ENCODE measurements at regions of chr1 and their contacts with region 1.

Region 1: DNA sequence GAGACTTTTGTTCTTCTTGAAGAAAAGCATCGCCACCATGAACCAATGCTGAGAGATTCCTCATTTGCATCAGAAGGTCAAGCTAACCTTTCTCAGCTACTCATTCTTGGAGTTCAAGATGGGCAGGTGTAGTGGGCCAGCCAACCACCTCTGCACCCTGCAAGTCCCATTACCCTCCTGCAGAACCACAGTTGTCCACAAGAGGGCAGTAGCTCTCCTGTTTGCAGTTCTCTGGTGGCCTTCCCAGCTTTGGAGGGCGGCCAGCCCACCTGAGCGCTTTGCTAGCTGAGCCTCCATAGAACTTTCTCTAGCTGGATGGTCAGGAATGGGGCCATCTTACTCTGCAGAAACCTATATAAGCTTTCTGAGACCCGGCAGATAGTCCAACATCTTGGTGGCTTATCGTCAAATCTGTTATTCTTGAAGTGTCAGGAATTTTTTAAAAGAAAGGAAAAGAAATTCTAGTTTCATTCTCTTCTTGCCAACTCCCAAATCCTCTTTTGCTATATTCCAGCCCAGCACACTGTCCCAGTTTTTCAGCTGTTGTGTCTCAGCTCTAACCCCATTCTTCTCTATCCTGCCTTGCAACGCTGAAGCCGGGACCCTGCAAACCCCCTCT is 11.0 kb upstream of the LMX1A start:
- DNase-seq: peak; percentile 71 to 74
- ATAC-seq: peak; percentile 65 to 89; a peak in 5 of 6 replicates
- H3K4me3 ChIP-seq: no peak overlapping the region
- H3K27ac ChIP-seq: no peak overlapping the region
- H3K4me1 ChIP-seq: no peaks in the 10 kb centered on the region
- CTCF ChIP-seq: peak; percentile 75
- EP300 ChIP-seq: no peak
- POLR2A ChIP-seq: no peak
- RAD21 ChIP-seq: peak; percentile 46 to 48; a peak in 4 of 5 replicates

Region 2: DNA sequence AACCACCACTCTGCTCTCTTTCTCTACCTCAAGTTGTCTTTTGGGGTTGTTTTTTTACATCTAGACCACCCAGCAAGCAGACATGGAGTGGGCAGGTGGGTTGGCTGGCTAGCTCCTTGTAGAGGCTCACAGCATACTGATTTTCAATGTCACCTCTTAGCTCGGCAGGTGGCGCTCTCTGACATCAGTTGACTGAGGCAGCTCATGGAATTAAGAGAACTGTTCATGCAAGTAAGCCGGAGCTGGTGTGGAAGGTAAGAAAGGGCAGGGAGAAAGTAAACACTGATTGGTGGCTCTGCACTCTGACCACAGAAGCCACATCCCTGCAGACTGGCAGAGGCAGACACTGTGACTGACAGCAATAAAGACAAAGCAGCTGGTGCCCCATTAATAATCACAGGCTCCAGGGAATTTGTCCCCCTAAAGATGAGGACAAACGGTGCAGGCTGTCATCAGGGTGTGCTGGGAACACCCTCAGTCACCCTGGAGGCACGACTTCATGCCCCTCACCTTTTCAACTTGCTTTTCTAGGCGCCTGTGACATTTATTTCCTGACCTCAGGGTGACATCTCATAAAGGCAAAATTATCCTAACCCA is 237.8 kb before region 1 on chr1:
- CTCF ChIA-PET with region 1: interaction called, 24 read pairs
- POLR2A ChIA-PET with region 1: no interaction called
- DNase-seq: peak; percentile 42 to 61
- ATAC-seq: peak; percentile 90 to 95
- H3K4me3 ChIP-seq: no peak overlapping the region
- H3K27ac ChIP-seq: no peak overlapping the region
- H3K4me1 ChIP-seq: no peaks in the 10 kb centered on the region
- CTCF ChIP-seq: peak; percentile 59
- EP300 ChIP-seq: no peak
- POLR2A ChIP-seq: no peak
- RAD21 ChIP-seq: peak; percentile 46 to 54; a peak in 4 of 5 replicates

Region 3: DNA sequence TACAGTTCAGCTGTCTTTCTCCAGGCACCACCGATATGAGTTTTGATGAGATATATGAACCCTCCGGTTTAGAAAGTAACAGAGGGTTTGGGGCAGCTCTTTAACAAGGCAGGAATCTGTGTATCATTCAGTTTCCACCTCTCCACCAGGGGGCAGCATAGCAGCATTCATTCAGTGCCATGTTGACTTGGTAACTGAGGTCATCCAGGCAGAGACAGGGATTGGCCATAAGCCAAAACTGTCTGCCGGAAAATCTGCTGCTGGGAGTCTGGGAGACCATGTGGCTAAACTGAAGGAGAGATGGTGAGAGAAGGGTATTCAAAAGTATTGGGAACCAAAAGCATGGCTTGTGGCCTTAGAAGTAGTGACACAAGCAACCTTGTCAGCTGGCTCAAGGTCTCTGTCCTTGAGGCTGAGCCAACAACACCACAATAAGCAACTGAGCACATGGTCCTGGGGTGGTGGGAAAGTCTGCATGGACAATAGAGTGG is 109.5 kb before region 1 on chr1:
- CTCF ChIA-PET with region 1: interaction called, 35 read pairs
- POLR2A ChIA-PET with region 1: no interaction called
- DNase-seq: peak; percentile 61 to 65
- ATAC-seq: peak; percentile 70 to 92; a peak in 5 of 6 replicates
- H3K4me3 ChIP-seq: no peak overlapping the region
- H3K27ac ChIP-seq: no peak overlapping the region
- H3K4me1 ChIP-seq: no peaks in the 10 kb centered on the region
- CTCF ChIP-seq: peak; percentile 56
- EP300 ChIP-seq: no peak
- POLR2A ChIP-seq: no peak
- RAD21 ChIP-seq: peak; percentile 63 to 71

Region 4: DNA sequence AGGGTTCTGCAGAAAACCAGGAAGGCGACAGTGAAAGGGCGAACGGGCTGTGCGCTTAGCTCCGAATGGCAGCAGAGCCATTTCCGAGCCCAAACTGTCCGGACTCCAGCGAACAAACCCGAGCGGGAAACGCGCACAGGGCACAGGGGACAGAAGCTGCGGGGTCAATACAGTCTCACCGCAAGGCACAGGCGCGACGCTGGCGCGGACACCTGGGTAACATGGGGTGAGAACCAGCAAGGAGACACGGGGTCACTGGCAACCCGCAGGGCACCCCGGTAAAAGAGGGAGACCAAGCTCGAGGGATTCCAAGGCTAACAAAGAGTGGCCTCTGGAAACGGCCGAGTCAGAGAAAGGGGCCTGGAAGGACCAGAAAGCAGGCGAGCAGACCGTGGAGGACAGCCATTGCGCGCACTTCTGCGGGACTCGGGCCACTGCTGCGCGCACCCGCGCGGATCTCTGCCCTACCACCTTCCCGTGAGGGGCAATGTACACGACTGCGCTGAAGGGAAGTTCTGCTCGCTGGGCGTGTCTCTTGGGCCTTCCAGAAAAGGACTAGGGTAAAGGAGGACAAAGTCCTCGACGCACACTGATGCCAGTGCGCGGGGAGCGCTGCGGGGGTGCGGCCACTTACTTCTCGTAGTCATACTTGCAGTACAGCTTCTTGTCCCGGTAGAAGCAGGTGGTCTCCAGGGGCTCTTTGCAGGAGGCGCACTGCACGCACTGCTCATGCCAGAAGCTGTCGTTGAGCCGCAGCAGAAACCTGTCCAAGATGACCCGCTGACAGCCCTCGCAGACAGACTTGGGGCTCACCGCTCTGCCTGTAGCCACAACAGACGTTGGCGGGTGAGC is 14.8 kb before region 1 on chr1:
- CTCF ChIA-PET with region 1: interaction called, 39 read pairs
- POLR2A ChIA-PET with region 1: no interaction called
- DNase-seq: no peak
- ATAC-seq: peak in 1 of 2 experiments; percentile 16; a peak in 1 of 6 replicates
- H3K4me3 ChIP-seq: no peak overlapping the region
- H3K27ac ChIP-seq: no peak overlapping the region
- H3K4me1 ChIP-seq: peaks cover 3% of the 10 kb centered on the region; the same call in 1 of the 3 replicates
- CTCF ChIP-seq: no peak
- EP300 ChIP-seq: no peak
- POLR2A ChIP-seq: no peak
- RAD21 ChIP-seq: no peak

Region 5: DNA sequence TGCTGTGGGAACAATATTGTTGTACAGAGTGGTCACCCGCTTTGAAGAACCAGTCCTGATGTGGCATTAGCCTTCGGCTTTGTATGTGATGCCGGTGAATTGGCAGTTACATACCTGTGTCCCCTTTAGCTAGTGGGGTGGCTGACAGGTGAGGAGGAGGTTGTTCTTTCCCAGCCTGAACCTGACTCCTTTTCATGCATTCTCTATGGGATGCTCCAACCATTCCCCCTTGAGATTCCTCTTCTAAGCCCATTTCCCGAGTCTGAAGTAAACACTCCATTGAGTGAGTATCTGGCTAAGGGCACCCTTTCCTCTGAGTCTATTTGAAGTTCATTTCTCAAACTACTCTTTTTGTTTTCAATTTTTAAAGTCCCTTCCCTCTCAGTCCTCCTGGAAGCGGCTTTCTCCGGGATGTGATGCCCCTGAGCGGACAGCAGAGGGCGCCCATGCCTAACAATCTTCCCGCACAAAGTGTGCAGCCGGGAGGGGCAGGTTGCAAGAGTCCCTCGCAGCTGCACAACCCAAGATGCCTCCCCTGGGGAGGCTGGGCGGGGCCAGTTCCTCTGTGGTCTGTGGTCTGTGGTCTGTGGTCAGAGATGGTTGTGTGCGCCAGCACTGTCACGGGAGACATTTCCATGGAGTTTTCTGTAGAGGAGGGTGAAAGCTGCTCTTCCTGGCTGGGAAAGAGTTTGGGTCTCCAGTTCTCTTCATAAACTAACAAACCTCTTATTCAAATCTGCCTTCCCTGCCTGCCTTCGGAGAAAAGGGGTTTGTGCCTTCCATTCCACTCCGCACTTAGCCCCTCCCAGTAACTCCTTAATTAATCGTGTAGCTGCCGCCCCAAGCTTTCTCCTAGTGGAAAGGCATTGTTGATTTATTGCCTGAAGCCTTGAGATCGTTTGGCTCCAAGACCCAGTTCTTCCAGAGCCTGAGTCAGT is 25.4 kb after region 1 on chr1:
- CTCF ChIA-PET with region 1: interaction called, 45 read pairs
- POLR2A ChIA-PET with region 1: no interaction called
- DNase-seq: peak; percentile 61 to 73
- ATAC-seq: peak; percentile 82 to 95
- H3K4me3 ChIP-seq: no peak overlapping the region
- H3K27ac ChIP-seq: no peak overlapping the region
- H3K4me1 ChIP-seq: no peaks in the 10 kb centered on the region
- CTCF ChIP-seq: peak; percentile 88
- EP300 ChIP-seq: no peak
- POLR2A ChIP-seq: no peak
- RAD21 ChIP-seq: peak; percentile 82 to 83